Heart right ventricle (tissue), 16 donors: ENCODE measurements at regions of chr9 and their contacts with region 1.

Region 1: DNA sequence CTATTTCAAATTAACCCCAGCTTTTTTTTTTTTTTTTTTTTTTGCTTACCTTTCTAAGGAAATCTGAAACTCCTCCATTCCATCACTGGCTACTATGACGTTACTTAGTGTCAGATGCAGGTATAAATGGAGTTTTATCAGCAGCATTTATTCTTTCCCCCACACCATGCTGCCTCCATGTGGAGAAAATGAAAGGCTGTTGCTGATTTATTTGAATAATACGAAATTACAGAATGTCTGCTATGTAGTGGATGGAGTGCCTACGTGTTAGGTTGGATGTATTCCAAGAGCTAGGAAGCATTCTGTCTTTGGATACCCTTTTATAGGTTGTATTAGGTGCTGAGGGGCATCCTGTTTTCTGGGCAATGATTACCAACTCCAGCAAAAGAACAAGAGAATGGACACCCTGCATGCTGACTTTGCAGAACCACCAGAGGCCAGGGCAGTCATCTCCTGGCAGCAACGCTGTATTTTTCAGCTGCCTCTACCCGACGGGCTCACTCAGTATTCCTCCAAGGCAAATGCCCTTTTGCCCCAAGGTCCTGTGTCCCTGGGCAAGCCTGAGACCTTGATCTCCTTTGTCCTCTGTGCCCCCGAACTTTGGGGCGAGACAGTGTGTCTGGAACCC is 199.5 kb downstream of the ALDH1A1 start:
- DNase-seq: no peak
- ATAC-seq: no peak
- H3K4me3 ChIP-seq: no peak overlapping the region
- H3K27ac ChIP-seq: no peak overlapping the region
- H3K4me1 ChIP-seq: no peaks in the 10 kb centered on the region
- H3K27me3 ChIP-seq: no peaks in the 10 kb centered on the region
- CTCF ChIP-seq: peak in 6 of 9 donors; percentile 21 to 43 (median 26)

Region 2: GRCh38 chr9:72292256-72292682 is 461.1 kb before region 1 on chr9:
- intact Hi-C with region 1: loop called in 2 of 10 experiments (anchors 5 to 10 kb)
- DNase-seq: no peak
- ATAC-seq: peak in 3 of 8 donors; percentile 30 to 51 (median 44)
- H3K4me3 ChIP-seq: no peak overlapping the region
- H3K27ac ChIP-seq: peak overlapping the region in 1 of 10 donors; percentile 68
- H3K4me1 ChIP-seq: peaks cover 0 to 33% (median 8%) of the 10 kb centered on the region in 9 donors
- H3K27me3 ChIP-seq: no peaks in the 10 kb centered on the region
- CTCF ChIP-seq: peak; percentile 44 to 79 (median 65)

Region 3: GRCh38 chr9:72721067-72721466 is 32.3 kb before region 1 on chr9:
- intact Hi-C with region 1: loop called in 1 of 10 experiments (anchors 2 kb)
- DNase-seq: no peak
- ATAC-seq: no peak
- H3K4me3 ChIP-seq: no peak overlapping the region
- H3K27ac ChIP-seq: no peak overlapping the region
- H3K4me1 ChIP-seq: no peaks in the 10 kb centered on the region
- H3K27me3 ChIP-seq: no peaks in the 10 kb centered on the region
- CTCF ChIP-seq: no peak

Region 4: GRCh38 chr9:72902268-72902667 is 148.9 kb after region 1 on chr9:
- intact Hi-C with region 1: no loop called
- DNase-seq: no peak
- ATAC-seq: no peak
- H3K4me3 ChIP-seq: no peak overlapping the region
- H3K27ac ChIP-seq: no peak overlapping the region
- H3K4me1 ChIP-seq: peaks cover 0 to 3% (median 0%) of the 10 kb centered on the region in 9 donors
- H3K27me3 ChIP-seq: no peaks in the 10 kb centered on the region
- CTCF ChIP-seq: no peak